Heart left ventricle (tissue), 16 donors: ENCODE measurements at regions of chr20 and their contacts with region 1.

Region 1: GRCh38 chr20:18276821-18277220 is 11.5 kb upstream of the ZNF133 start:
- DNase-seq: peak in 4 of 5 donors; percentile 34 to 54 (median 44)
- ATAC-seq: peak in 3 of 4 donors; percentile 53 to 82 (median 81)
- H3K4me3 ChIP-seq: no peak overlapping the region
- H3K27ac ChIP-seq: no peak overlapping the region
- H3K4me1 ChIP-seq: peaks cover 0 to 4% (median 0%) of the 10 kb centered on the region in 12 donors
- H3K27me3 ChIP-seq: peaks cover 0 to 43% (median 13%) of the 10 kb centered on the region in 9 donors
- CTCF ChIP-seq: peak; percentile 33 to 79 (median 64)
- POLR2A ChIP-seq: no peak

Region 2: GRCh38 chr20:18137412-18138265 is 139.2 kb before region 1 on chr20 and contains the starts of genes KAT14 and PET117:
- intact Hi-C with region 1: loop called in 6 of 10 experiments (anchors 10 kb)
- DNase-seq: peak; percentile 92 to 96 (median 93)
- ATAC-seq: peak; percentile 93 to 99 (median 98)
- H3K4me3 ChIP-seq: peak within 1 kb of the TSS; percentile 55 to 100 (median 92)
- H3K27ac ChIP-seq: peak within 1 kb of the TSS; percentile 69 to 97 (median 90)
- H3K4me1 ChIP-seq: peaks cover 0 to 24% (median 17%) of the 10 kb centered on the region in 12 donors
- H3K27me3 ChIP-seq: no peaks in the 10 kb centered on the region
- CTCF ChIP-seq: peak in 1 of 12 donors; percentile 5
- POLR2A ChIP-seq: peak in 1 of 2 donors; percentile 70
- total RNA-seq, gene KAT14: 8.3 to 12.3 (median 10.9) TPM
- total RNA-seq, gene PET117: 8.1 to 15.0 (median 11.9) TPM

Region 3: DNA sequence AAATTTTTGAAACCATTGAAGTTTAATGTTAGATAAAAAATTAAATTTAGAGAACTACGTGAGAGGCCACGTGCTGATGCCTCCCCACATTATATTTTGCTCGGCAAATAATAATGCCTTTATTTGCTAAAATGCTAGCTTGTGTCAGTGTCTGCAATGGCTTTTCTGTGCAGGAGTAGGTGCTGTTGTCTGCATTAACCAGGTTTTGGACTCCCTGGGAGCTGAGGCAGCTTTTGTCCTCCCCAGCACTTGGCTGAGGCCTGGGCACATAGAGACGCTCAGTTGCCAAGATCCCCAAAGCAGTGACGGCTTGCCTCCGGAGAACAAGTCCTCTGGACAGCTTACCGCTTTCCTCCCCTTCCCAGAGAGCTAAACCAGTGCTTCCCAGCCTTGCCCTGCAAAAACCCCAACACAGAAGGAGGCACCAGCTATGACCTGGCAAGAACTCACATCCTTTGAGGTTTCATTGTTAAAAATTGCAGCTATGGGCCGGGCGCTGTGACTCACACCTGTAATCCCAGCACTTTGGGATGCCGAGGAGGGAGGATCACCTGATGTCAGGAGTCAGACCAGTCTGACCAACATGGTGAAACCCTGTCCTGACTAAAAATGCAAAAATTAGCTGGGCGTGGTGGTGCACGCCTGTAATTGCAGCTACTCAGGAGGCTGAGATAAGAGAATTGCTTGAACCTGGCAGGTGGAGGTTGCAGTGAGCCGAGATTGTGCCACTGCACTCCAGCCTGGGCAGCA is 79.3 kb before region 1 on chr20:
- intact Hi-C with region 1: no loop called
- DNase-seq: no peak
- ATAC-seq: no peak
- H3K4me3 ChIP-seq: no peak overlapping the region
- H3K27ac ChIP-seq: no peak overlapping the region
- H3K4me1 ChIP-seq: no peaks in the 10 kb centered on the region
- H3K27me3 ChIP-seq: no peaks in the 10 kb centered on the region
- CTCF ChIP-seq: no peak
- POLR2A ChIP-seq: no peak